CD4-positive, alpha-beta memory T cell (primary cell): ENCODE measurements at regions of chr2 and their contacts with region 1.

Region 1: GRCh38 chr2:71226965-71227560 is at the start of gene PAIP2B:
- DNase-seq: peak; percentile 97 to 99 (median 99)
- H3K4me3 ChIP-seq: peak within 1 kb of the TSS; percentile 68 to 71
- H3K4me3 Mint-ChIP-seq: peak within 1 kb of the TSS; percentile 92 to 99 (median 98)
- H3K27ac ChIP-seq: peak within 1 kb of the TSS; percentile 53
- H3K27ac Mint-ChIP-seq: peak within 1 kb of the TSS; percentile 89 to 99 (median 96)
- H3K4me1 ChIP-seq: peaks cover 12% of the 10 kb centered on the region
- H3K4me1 Mint-ChIP-seq: peaks cover 16 to 33% (median 20%) of the 10 kb centered on the region in 4 donors
- H3K27me3 ChIP-seq: no peaks in the 10 kb centered on the region
- H3K27me3 Mint-ChIP-seq: peaks cover 6 to 10% of the 10 kb centered on the region in 2 donors
- total RNA-seq, gene PAIP2B: 9.9 to 11.0 TPM

Region 2: GRCh38 chr2:70994756-70995729 is 232.0 kb before region 1 on chr2 and contains the start of gene TEX261:
- CTCF ChIA-PET with region 1: no interaction called
- POLR2A ChIA-PET with region 1: no interaction called
- intact Hi-C with region 1: loop called (anchors 1 kb)
- DNase-seq: peak; percentile 88 to 91 (median 89)
- H3K4me3 ChIP-seq: peak within 1 kb of the TSS; percentile 68 to 87
- H3K4me3 Mint-ChIP-seq: peak within 1 kb of the TSS; percentile 95 to 99 (median 96)
- H3K27ac ChIP-seq: peak within 1 kb of the TSS; percentile 81
- H3K27ac Mint-ChIP-seq: peak within 1 kb of the TSS; percentile 91 to 98 (median 95)
- H3K4me1 ChIP-seq: peaks cover 26% of the 10 kb centered on the region
- H3K4me1 Mint-ChIP-seq: peaks cover 24 to 40% (median 32%) of the 10 kb centered on the region in 4 donors
- H3K27me3 ChIP-seq: no peaks in the 10 kb centered on the region
- H3K27me3 Mint-ChIP-seq: no peaks in the 10 kb centered on the region
- total RNA-seq, gene TEX261: 61.1 to 70.0 TPM

Region 3: GRCh38 chr2:71130113-71130904 is 96.8 kb before region 1 on chr2 and contains the starts of genes MCEE and MPHOSPH10:
- CTCF ChIA-PET with region 1: interaction called, 5 read pairs
- POLR2A ChIA-PET with region 1: interaction called, 26 read pairs
- intact Hi-C with region 1: loop called (anchors 1 kb)
- DNase-seq: peak; percentile 88 to 92 (median 90)
- H3K4me3 ChIP-seq: peak within 1 kb of the TSS; percentile 88 to 91
- H3K4me3 Mint-ChIP-seq: no peak within 1 kb of the TSS
- H3K27ac ChIP-seq: peak within 1 kb of the TSS; percentile 77
- H3K27ac Mint-ChIP-seq: no peak within 1 kb of the TSS
- H3K4me1 ChIP-seq: peaks cover 38% of the 10 kb centered on the region
- H3K4me1 Mint-ChIP-seq: peaks cover 11 to 22% (median 15%) of the 10 kb centered on the region in 4 donors
- H3K27me3 ChIP-seq: no peaks in the 10 kb centered on the region
- H3K27me3 Mint-ChIP-seq: no peaks in the 10 kb centered on the region
- total RNA-seq, gene MCEE: 27.1 to 30.0 TPM
- total RNA-seq, gene MPHOSPH10: 50.6 to 54.2 TPM

Region 4: GRCh38 chr2:71157124-71157793 is 69.8 kb before region 1 on chr2:
- CTCF ChIA-PET with region 1: interaction called, 11 read pairs
- POLR2A ChIA-PET with region 1: no interaction called
- intact Hi-C with region 1: no loop called
- DNase-seq: peak in 4 of 5 donors; percentile 32 to 46 (median 40)
- H3K4me3 ChIP-seq: no peak overlapping the region
- H3K4me3 Mint-ChIP-seq: peak overlapping the region in 1 of 8 donors; percentile 35
- H3K27ac ChIP-seq: no peak overlapping the region
- H3K27ac Mint-ChIP-seq: no peak overlapping the region
- H3K4me1 ChIP-seq: peaks cover 8% of the 10 kb centered on the region
- H3K4me1 Mint-ChIP-seq: peaks cover 2 to 9% (median 9%) of the 10 kb centered on the region in 4 donors
- H3K27me3 ChIP-seq: no peaks in the 10 kb centered on the region
- H3K27me3 Mint-ChIP-seq: peaks cover 9 to 11% of the 10 kb centered on the region in 2 donors

Region 5: DNA sequence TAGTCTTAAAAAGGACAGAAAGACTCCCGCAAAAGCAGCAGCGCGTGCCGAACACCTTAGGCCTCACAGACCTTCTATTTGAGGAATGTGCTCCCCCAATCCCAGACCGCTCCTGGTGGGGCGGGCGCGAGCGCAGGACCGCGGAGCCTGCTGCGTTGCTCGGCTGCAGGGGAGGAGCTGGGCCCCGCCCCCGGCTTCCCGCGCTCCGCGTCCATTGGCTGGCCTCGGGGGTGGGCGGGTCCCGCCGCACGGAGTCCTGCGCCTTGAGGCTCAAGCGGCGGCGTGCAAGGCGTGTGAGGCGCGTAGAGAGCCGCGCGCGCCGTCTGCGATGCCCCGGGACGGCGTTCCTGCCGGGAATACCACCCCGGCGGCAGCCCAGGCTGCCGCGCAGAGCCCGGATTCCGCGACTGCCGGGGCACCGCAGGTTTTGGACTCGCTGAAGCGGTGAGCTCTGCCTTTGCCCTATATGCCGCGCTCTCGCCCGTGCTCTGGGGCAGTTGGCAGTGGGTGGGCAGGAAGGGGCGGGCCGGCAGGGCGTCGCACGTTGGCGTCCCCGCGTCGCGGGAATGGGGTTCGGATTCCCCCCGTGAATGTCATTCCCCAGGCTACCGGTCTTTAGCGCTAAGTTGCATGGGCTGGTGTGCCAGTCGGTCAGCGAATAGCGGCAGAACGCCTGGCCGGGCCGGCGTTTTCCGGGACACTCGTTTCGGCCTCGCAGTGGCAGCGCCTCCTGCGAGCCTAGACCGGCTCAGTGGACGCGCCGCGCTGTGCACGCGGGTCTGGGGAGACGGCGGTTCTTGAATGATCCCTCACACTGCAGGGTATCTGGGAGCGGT is 49.5 kb after region 1 on chr2:
- CTCF ChIA-PET with region 1: interaction called, 4 read pairs
- POLR2A ChIA-PET with region 1: interaction called, 3 read pairs
- intact Hi-C with region 1: loop called (anchors 2 kb)
- DNase-seq: peak; percentile 77 to 84 (median 82)
- H3K4me3 ChIP-seq: peak overlapping the region; percentile 41 to 42
- H3K4me3 Mint-ChIP-seq: peak overlapping the region; percentile 63 to 79 (median 74)
- H3K27ac ChIP-seq: no peak overlapping the region
- H3K27ac Mint-ChIP-seq: peak overlapping the region in 1 of 7 donors; percentile 32
- H3K4me1 ChIP-seq: peaks cover 18% of the 10 kb centered on the region
- H3K4me1 Mint-ChIP-seq: peaks cover 6 to 13% (median 9%) of the 10 kb centered on the region in 4 donors
- H3K27me3 ChIP-seq: peaks cover 29% of the 10 kb centered on the region
- H3K27me3 Mint-ChIP-seq: peaks cover 62% of the 10 kb centered on the region in 2 donors